ENCODE measurements at regions of chr14 and their contacts with region 1.

Region 1: DNA sequence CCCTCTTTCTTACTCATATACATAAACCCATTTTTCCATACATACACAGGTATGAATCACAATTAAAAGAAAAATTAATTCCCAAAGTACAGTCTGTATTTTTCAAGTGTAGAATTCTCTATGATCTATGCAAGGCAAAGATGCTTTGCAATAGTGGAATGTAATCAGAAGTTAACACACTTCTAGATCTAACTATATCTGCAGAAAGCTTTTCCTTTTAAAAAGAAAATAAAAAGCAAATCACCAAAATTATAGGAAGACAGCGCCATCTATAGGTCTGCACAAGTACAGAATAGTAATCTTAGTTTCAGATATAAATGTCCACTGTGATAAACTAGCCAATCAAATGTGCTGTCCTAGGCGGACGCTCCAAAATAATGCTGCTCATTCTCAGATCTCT is 22.0 kb downstream of the SLC25A21 start:
- DNase-seq: no peak
- H3K4me3 ChIP-seq: no peak overlapping the region
- CTCF ChIP-seq: peak; percentile 48

Region 2: GRCh38 chr14:36604757-36605505 is 545.5 kb before region 1 on chr14:
- CTCF ChIA-PET with region 1: interaction called, 16 read pairs
- POLR2A ChIA-PET with region 1: no interaction called
- DNase-seq: peak; percentile 10
- H3K4me3 ChIP-seq: no peak overlapping the region
- CTCF ChIP-seq: peak; percentile 77

Region 3: GRCh38 chr14:36655963-36656686 is 494.3 kb before region 1 on chr14:
- CTCF ChIA-PET with region 1: interaction called, 168 read pairs
- POLR2A ChIA-PET with region 1: no interaction called
- DNase-seq: no peak
- H3K4me3 ChIP-seq: no peak overlapping the region; the same call in 1 of the 2 replicates
- CTCF ChIP-seq: peak; percentile 45

Region 4: DNA sequence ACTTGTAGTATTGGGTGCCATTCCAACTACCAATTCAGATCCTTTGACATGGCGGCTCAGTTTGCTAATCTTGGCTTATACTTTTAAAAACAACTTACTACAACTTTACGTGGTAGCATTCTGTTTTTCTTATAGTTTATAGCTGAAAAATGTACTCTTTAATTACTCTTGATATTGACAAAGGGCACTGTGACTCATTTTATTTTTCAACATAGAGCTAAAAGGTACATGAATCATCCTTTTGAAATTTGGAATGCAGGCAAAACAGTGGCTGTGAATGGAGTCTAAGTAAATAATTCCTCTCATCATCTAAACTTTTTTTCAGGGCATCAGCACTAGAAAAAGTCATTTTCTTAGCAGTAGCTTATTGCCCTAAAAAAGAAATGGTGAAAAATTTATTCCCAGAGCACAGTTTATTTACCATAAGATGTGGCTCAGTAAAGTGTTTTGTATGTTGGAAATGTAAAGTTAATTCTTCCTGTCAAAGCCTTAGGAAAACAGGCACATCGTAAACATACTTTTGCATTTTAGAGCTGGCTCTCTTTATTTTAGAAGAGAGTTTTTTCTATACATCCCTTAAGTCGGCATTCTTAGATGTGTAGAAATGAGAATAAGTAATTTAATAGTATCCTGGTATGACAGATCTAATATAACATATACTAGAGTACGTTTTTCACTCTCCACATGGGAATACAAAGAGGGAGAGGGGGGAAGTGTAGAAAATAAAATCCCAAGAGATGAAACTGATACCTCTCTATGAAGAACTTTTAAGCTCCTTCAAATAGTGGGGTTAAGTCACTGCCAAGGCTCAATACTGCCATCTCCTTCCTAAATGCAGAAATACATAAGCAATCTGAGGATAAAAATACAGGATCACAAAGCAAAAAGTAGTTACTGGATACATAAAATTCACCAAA is 33.2 kb before region 1 on chr14:
- CTCF ChIA-PET with region 1: interaction called, 33 read pairs
- POLR2A ChIA-PET with region 1: no interaction called
- DNase-seq: no peak
- H3K4me3 ChIP-seq: no peak overlapping the region
- CTCF ChIP-seq: peak; percentile 55

Region 5: GRCh38 chr14:37172024-37172869 is 21.8 kb after region 1 on chr14 and contains the start of gene SLC25A21:
- CTCF ChIA-PET with region 1: interaction called, 13 read pairs
- POLR2A ChIA-PET with region 1: no interaction called
- DNase-seq: no peak
- H3K4me3 ChIP-seq: peak within 1 kb of the TSS; percentile 88
- CTCF ChIP-seq: peak; percentile 24

Region 6: GRCh38 chr14:37480446-37481290 is 330.3 kb after region 1 on chr14:
- CTCF ChIA-PET with region 1: no interaction called
- POLR2A ChIA-PET with region 1: no interaction called
- DNase-seq: no peak
- H3K4me3 ChIP-seq: no peak overlapping the region
- CTCF ChIP-seq: no peak

Measured in AG04449 (cell line).